CD4-positive, alpha-beta T cell (primary cell): ENCODE measurements at regions of chr4 and their contacts with region 1.

Region 1: DNA sequence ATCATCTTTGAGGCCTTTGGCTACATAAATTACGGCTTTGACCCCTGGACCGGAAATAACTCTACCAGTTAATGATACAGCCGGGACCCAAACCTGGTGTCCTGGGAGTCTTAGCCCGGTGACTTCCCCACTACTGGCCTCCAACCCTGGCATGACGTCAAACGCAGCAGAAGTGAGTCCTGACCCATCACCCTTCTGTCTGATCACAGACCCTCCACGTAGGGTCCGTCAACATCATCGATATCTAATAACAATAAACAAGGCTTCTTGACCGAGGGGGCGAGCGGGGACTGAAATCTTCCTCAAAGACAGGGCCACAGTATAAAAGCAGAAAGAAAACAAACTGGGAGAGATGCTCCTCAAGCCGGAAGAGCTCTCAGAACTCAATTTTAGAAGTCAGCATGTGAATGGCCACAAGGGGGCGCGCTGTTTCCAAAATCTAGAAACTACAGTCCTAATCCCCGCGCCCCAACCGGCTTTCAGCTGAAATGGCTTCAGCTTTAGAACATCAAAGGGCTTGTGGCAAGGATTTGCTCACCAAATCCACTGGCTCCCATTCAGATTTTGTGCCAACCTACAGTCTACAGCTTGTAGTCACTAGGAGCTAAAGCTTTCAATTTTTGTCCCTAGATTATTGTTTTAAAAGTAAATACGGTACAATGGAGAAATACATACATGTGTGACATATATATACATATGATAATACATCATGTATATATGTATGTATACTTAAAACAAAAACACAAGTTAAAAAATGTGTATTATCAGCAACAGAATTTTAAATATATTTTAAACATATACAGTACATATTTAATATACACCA is 46.4 kb upstream of the ENPP6 start:
- DNase-seq: peak; percentile 87 to 99 (median 94)
- ATAC-seq: peak; percentile 84
- H3K4me3 ChIP-seq: no peak overlapping the region
- H3K4me3 Mint-ChIP-seq: peak overlapping the region; percentile 30
- H3K27ac ChIP-seq: no peak overlapping the region
- H3K27ac Mint-ChIP-seq: no peak overlapping the region
- H3K4me1 ChIP-seq: peaks cover 27% of the 10 kb centered on the region
- H3K4me1 Mint-ChIP-seq: peaks cover 36% of the 10 kb centered on the region
- H3K27me3 ChIP-seq: no peaks in the 10 kb centered on the region
- H3K27me3 Mint-ChIP-seq: no peaks in the 10 kb centered on the region
- CTCF ChIP-seq: peak; percentile 85

Region 2: GRCh38 chr4:184370711-184371389 is 106.7 kb after region 1 on chr4:
- CTCF ChIA-PET with region 1: no interaction called
- POLR2A ChIA-PET with region 1: no interaction called
- intact Hi-C with region 1: no loop called
- DNase-seq: no peak
- ATAC-seq: no peak
- H3K4me3 ChIP-seq: no peak overlapping the region
- H3K4me3 Mint-ChIP-seq: no peak overlapping the region
- H3K27ac ChIP-seq: no peak overlapping the region
- H3K27ac Mint-ChIP-seq: no peak overlapping the region
- H3K4me1 ChIP-seq: no peaks in the 10 kb centered on the region
- H3K4me1 Mint-ChIP-seq: no peaks in the 10 kb centered on the region
- H3K27me3 ChIP-seq: no peaks in the 10 kb centered on the region
- H3K27me3 Mint-ChIP-seq: no peaks in the 10 kb centered on the region
- CTCF ChIP-seq: no peak

Region 3: DNA sequence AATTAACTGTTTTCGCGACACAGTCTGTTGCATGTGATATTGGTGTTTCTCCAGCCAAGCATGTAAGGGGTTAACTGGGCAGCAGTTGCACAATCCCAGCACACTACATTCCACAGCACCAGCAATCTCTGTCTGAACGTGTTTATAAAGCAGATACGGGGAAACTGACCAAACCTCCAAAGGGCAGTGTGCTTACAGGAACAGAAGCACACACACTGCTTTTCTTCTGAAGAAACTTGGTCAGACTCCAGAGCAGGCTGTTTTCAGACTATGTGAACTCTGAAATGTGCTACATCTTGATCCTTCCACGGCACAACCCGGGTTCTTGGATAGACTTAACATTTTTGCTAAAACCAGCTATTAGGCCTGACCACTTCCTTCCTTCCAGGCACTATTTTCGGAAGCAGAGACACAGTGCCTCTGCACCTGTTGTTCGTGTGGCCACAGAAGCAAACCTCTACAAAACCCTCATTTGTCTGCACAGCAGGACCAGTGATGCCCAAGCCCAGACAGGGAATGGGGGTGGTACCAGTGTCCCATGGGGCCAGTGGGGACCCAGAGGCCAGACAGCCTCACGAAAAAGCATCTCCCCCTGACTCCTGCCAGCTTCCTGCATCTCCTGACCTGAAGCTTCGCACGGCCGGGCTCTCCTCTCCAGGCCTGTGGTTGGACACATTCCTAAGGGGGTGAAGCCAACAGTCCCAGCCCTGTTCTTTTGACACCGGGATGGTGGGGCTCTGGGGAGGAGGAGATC is 120.1 kb after region 1 on chr4:
- CTCF ChIA-PET with region 1: interaction called, 5 read pairs
- POLR2A ChIA-PET with region 1: no interaction called
- intact Hi-C with region 1: loop called (anchors 10 kb)
- DNase-seq: peak in 3 of 14 experiments; percentile 8 to 39 (median 10)
- ATAC-seq: peak; percentile 11
- H3K4me3 ChIP-seq: no peak overlapping the region
- H3K4me3 Mint-ChIP-seq: peak overlapping the region; percentile 40
- H3K27ac ChIP-seq: peak overlapping the region in 1 of 2 donors; percentile 15
- H3K27ac Mint-ChIP-seq: peak overlapping the region; percentile 60
- H3K4me1 ChIP-seq: peaks cover 44% of the 10 kb centered on the region
- H3K4me1 Mint-ChIP-seq: peaks cover 68% of the 10 kb centered on the region
- H3K27me3 ChIP-seq: no peaks in the 10 kb centered on the region
- H3K27me3 Mint-ChIP-seq: no peaks in the 10 kb centered on the region
- CTCF ChIP-seq: no peak

Region 4: GRCh38 chr4:184474263-184475095 is 210.4 kb after region 1 on chr4 and contains the start of gene IRF2:
- CTCF ChIA-PET with region 1: interaction called, 4 read pairs
- POLR2A ChIA-PET with region 1: interaction called, 30 read pairs
- intact Hi-C with region 1: loop called (anchors 2 to 5 kb)
- DNase-seq: peak; percentile 92 to 99 (median 96)
- ATAC-seq: peak; percentile 81
- H3K4me3 ChIP-seq: peak within 1 kb of the TSS; percentile 99
- H3K4me3 Mint-ChIP-seq: peak within 1 kb of the TSS; percentile 98
- H3K27ac ChIP-seq: peak within 1 kb of the TSS; percentile 87 to 95
- H3K27ac Mint-ChIP-seq: peak within 1 kb of the TSS; percentile 98
- H3K4me1 ChIP-seq: peaks cover 51% of the 10 kb centered on the region
- H3K4me1 Mint-ChIP-seq: peaks cover 65% of the 10 kb centered on the region
- H3K27me3 ChIP-seq: no peaks in the 10 kb centered on the region
- H3K27me3 Mint-ChIP-seq: no peaks in the 10 kb centered on the region
- CTCF ChIP-seq: no peak
- total RNA-seq, gene IRF2: 11.4 to 14.9 TPM

Region 5: GRCh38 chr4:184733654-184734524 is 469.8 kb after region 1 on chr4 and contains the start of gene CENPU:
- CTCF ChIA-PET with region 1: interaction called, 20 read pairs
- POLR2A ChIA-PET with region 1: interaction called, 11 read pairs
- intact Hi-C with region 1: loop called (anchors 5 to 10 kb)
- DNase-seq: peak; percentile 91 to 98 (median 93)
- ATAC-seq: peak; percentile 97
- H3K4me3 ChIP-seq: peak within 1 kb of the TSS; percentile 87
- H3K4me3 Mint-ChIP-seq: peak within 1 kb of the TSS; percentile 93
- H3K27ac ChIP-seq: no peak within 1 kb of the TSS
- H3K27ac Mint-ChIP-seq: peak within 1 kb of the TSS; percentile 74
- H3K4me1 ChIP-seq: peaks cover 13% of the 10 kb centered on the region
- H3K4me1 Mint-ChIP-seq: peaks cover 17% of the 10 kb centered on the region
- H3K27me3 ChIP-seq: no peaks in the 10 kb centered on the region
- H3K27me3 Mint-ChIP-seq: no peaks in the 10 kb centered on the region
- CTCF ChIP-seq: no peak
- total RNA-seq, gene CENPU: 1.9 to 2.8 TPM

Region 6: GRCh38 chr4:184961660-184962059 is 697.5 kb after region 1 on chr4:
- CTCF ChIA-PET with region 1: no interaction called
- POLR2A ChIA-PET with region 1: no interaction called
- intact Hi-C with region 1: loop called in 1 of 2 experiments (anchors 5 kb)
- DNase-seq: no peak
- ATAC-seq: no peak
- H3K4me3 ChIP-seq: no peak overlapping the region
- H3K4me3 Mint-ChIP-seq: no peak overlapping the region
- H3K27ac ChIP-seq: no peak overlapping the region
- H3K27ac Mint-ChIP-seq: no peak overlapping the region
- H3K4me1 ChIP-seq: no peaks in the 10 kb centered on the region
- H3K4me1 Mint-ChIP-seq: peaks cover 11% of the 10 kb centered on the region
- H3K27me3 ChIP-seq: peaks cover 0 to 3% of the 10 kb centered on the region in 2 experiments
- H3K27me3 Mint-ChIP-seq: peaks cover 5% of the 10 kb centered on the region
- CTCF ChIP-seq: no peak

Region 7: GRCh38 chr4:185033950-185034349 is 769.8 kb after region 1 on chr4:
- CTCF ChIA-PET with region 1: no interaction called
- POLR2A ChIA-PET with region 1: no interaction called
- intact Hi-C with region 1: no loop called
- DNase-seq: no peak
- ATAC-seq: no peak
- H3K4me3 ChIP-seq: no peak overlapping the region
- H3K4me3 Mint-ChIP-seq: no peak overlapping the region
- H3K27ac ChIP-seq: no peak overlapping the region
- H3K27ac Mint-ChIP-seq: no peak overlapping the region
- H3K4me1 ChIP-seq: no peaks in the 10 kb centered on the region
- H3K4me1 Mint-ChIP-seq: no peaks in the 10 kb centered on the region
- H3K27me3 ChIP-seq: peaks cover 12 to 19% of the 10 kb centered on the region in 2 experiments
- H3K27me3 Mint-ChIP-seq: peaks cover 38% of the 10 kb centered on the region
- CTCF ChIP-seq: no peak

Region 8: DNA sequence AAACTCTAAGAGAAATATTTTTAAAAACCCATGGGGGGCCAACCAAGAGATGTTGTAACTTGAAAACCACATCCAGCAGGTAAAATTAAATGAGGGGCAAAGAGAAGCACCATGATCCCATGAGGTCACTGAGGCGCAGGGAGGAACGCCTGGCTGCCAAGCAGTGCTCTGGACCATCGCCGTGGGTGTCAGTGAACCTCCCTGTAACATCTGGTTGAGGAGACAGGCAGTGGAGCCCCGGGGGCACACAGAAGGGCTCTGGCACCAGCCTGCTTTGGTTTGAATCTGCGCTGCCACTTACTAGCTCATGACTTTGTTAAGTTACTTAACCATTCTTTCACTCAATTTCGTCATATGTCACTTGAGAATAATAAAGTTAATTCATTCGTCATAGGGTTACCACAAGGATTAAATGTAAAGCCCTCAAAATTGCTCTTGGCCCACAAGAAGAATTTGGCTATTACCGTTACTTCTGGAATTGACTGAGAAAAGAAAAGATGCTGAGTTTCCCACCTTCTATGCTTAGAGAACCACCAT is 837.3 kb after region 1 on chr4:
- CTCF ChIA-PET with region 1: interaction called, 10 read pairs
- POLR2A ChIA-PET with region 1: interaction called, 3 read pairs
- intact Hi-C with region 1: loop called (anchors 1 to 5 kb)
- DNase-seq: no peak
- ATAC-seq: no peak
- H3K4me3 ChIP-seq: no peak overlapping the region
- H3K4me3 Mint-ChIP-seq: no peak overlapping the region
- H3K27ac ChIP-seq: no peak overlapping the region
- H3K27ac Mint-ChIP-seq: no peak overlapping the region
- H3K4me1 ChIP-seq: no peaks in the 10 kb centered on the region
- H3K4me1 Mint-ChIP-seq: no peaks in the 10 kb centered on the region
- H3K27me3 ChIP-seq: peaks cover 11 to 18% of the 10 kb centered on the region in 2 experiments
- H3K27me3 Mint-ChIP-seq: peaks cover 36% of the 10 kb centered on the region
- CTCF ChIP-seq: no peak

Region 9: GRCh38 chr4:185165605-185166063 is 901.5 kb after region 1 on chr4:
- CTCF ChIA-PET with region 1: no interaction called
- POLR2A ChIA-PET with region 1: no interaction called
- intact Hi-C with region 1: no loop called
- DNase-seq: peak in 3 of 14 experiments; percentile 66 to 75 (median 71)
- ATAC-seq: peak; percentile 88
- H3K4me3 ChIP-seq: no peak overlapping the region
- H3K4me3 Mint-ChIP-seq: peak overlapping the region; percentile 49
- H3K27ac ChIP-seq: no peak overlapping the region
- H3K27ac Mint-ChIP-seq: peak overlapping the region; percentile 60
- H3K4me1 ChIP-seq: peaks cover 10% of the 10 kb centered on the region
- H3K4me1 Mint-ChIP-seq: peaks cover 31% of the 10 kb centered on the region
- H3K27me3 ChIP-seq: no peaks in the 10 kb centered on the region
- H3K27me3 Mint-ChIP-seq: peaks cover 12% of the 10 kb centered on the region
- CTCF ChIP-seq: no peak